Spleen (tissue), 13 donors: ENCODE measurements at regions of chr17 and their contacts with region 1.

Region 1: GRCh38 chr17:81253358-81254131 is 14.4 kb downstream of the NDUFAF8 start:
- DNase-seq: no peak
- H3K4me3 ChIP-seq: no peak overlapping the region
- H3K27ac ChIP-seq: no peak overlapping the region
- H3K4me1 ChIP-seq: peaks cover 0 to 51% (median 17%) of the 10 kb centered on the region in 6 donors
- H3K27me3 ChIP-seq: no peaks in the 10 kb centered on the region
- CTCF ChIP-seq: peak; percentile 74 to 98 (median 90)
- POLR2A ChIP-seq: no peak

Region 2: GRCh38 chr17:81484195-81484979 is 230.8 kb after region 1 on chr17:
- intact Hi-C with region 1: loop called (anchors 10 kb)
- DNase-seq: peak; percentile 98
- H3K4me3 ChIP-seq: peak overlapping the region; percentile 24 to 65 (median 41)
- H3K27ac ChIP-seq: peak overlapping the region in 4 of 8 donors; percentile 16 to 57 (median 26)
- H3K4me1 ChIP-seq: peaks cover 38 to 91% (median 74%) of the 10 kb centered on the region in 6 donors
- H3K27me3 ChIP-seq: peaks cover 0 to 89% (median 11%) of the 10 kb centered on the region in 7 donors
- CTCF ChIP-seq: peak; percentile 82 to 100 (median 99)
- POLR2A ChIP-seq: no peak

Region 3: DNA sequence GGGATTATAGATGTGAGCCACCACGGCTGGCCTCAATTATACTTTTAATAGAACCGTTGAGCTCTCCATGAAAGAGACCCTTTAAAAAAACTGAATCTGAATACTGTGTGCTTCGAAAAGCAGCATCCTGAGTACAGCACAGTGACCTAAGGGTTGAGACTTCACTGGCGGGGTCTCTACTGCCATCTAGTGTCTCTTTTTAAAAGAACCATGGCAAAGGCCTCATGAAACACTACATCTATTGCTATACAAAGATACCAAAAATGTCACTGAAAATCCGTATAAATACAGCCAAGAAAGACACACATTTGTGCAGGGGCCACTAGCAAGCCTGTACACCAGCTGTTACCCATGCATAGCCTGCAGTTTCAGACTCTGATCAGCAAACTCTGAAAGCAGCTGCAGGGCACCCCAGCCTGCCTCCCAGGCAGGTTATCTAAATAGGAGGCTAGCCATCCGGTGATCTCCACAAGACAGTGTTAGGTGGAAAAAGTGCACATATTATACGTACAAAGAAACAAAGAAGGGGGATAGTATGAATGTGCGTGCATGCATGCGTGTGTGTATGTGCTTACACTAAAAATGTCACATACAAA is 348.1 kb after region 1 on chr17:
- intact Hi-C with region 1: loop called (anchors 5 kb)
- DNase-seq: no peak
- H3K4me3 ChIP-seq: no peak overlapping the region
- H3K27ac ChIP-seq: peak overlapping the region in 3 of 8 donors; percentile 17 to 54 (median 43)
- H3K4me1 ChIP-seq: peaks cover 15 to 56% (median 47%) of the 10 kb centered on the region in 6 donors
- H3K27me3 ChIP-seq: no peaks in the 10 kb centered on the region
- CTCF ChIP-seq: peak; percentile 37 to 85 (median 77)
- POLR2A ChIP-seq: no peak